ENCODE measurements at regions of chr6 and their contacts with region 1.

Region 1: GRCh38 chr6:20092071-20092566 is 120.2 kb downstream of the MBOAT1 start:
- DNase-seq: no peak
- ATAC-seq: peak; percentile 55

Region 2: GRCh38 chr6:20534295-20535262 is 442.5 kb after region 1 on chr6 and contains the start of gene CDKAL1:
- intact Hi-C with region 1: loop called (anchors 5 kb)
- DNase-seq: peak; percentile 93
- ATAC-seq: peak; percentile 96
- total RNA-seq, gene CDKAL1: 20.5 TPM

Measured in sciatic nerve (tissue), 2 donors.